Ovary (tissue), 10 donors: ENCODE measurements at regions of chr6 and their contacts with region 1.

Region 1: DNA sequence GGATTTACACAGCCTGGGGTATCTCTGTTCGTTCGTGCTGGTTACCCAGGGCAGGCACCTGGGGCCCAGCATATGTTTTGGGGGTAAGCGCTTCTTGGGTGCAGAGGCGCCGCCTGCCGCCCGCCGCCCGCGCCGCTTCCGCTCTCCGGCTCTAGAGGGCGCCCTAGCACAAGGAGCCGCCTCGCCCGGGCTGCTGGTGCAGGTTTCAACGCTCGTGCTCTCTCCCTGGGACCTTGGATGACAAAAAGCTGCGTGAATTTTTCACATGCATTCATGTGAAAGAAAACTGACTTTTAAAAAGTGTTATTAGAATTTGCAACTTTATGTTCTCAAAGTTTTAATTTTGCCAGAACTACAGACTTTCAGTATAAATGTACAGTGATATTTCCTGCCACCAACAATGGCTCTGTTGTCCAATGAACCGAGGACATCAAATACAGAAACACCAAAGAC is 32.5 kb downstream of the PRR18 start:
- DNase-seq: peak; percentile 21 to 71 (median 39)
- H3K4me3 ChIP-seq: no peak overlapping the region
- H3K27ac ChIP-seq: no peak overlapping the region
- H3K4me1 ChIP-seq: no peaks in the 10 kb centered on the region
- H3K27me3 ChIP-seq: no peaks in the 10 kb centered on the region
- CTCF ChIP-seq: peak; percentile 48 to 50 (median 50)
- EP300 ChIP-seq: no peak
- POLR2A ChIP-seq: no peak

Region 2: DNA sequence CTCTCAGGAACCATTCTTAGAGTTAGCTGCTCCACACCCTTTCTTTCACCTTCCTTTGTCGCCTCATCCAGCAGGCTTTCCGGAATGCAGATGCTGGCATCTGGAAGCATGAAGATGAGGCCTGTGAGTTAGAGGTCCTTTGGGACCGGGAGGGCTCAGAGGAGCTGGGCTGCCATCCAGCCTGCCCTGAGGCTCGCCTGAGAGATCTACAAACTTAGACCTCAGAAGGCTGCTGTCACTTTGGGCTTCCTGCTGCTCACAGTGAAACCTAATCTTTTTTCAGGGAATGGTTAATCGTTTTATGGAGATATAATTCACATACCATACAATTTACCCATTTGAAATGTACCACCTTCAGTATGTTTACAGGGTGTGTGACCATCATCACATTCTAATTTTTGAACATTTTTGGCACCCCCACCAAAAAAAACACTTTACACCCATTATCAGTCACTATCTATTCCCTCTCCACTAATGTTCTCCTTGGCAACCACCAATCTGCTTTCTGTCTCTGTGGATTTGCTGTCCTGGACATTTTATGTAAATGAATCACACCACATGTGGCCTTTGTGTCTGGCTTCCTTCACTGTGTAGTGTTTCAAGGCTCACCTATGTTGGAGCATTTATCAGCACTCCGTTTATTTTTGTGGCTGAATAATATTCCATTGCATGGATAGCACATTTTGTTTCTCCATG is 127.0 kb after region 1 on chr6:
- intact Hi-C with region 1: loop called (anchors 5 to 10 kb)
- DNase-seq: no peak
- H3K4me3 ChIP-seq: no peak overlapping the region
- H3K27ac ChIP-seq: no peak overlapping the region
- H3K4me1 ChIP-seq: no peaks in the 10 kb centered on the region
- H3K27me3 ChIP-seq: no peaks in the 10 kb centered on the region
- CTCF ChIP-seq: no peak
- EP300 ChIP-seq: no peak
- POLR2A ChIP-seq: no peak

Region 3: GRCh38 chr6:166408936-166409755 is 133.4 kb after region 1 on chr6:
- intact Hi-C with region 1: loop called (anchors 5 to 10 kb)
- DNase-seq: no peak
- H3K4me3 ChIP-seq: no peak overlapping the region
- H3K27ac ChIP-seq: no peak overlapping the region
- H3K4me1 ChIP-seq: peaks cover 1% of the 10 kb centered on the region
- H3K27me3 ChIP-seq: no peaks in the 10 kb centered on the region
- CTCF ChIP-seq: no peak
- EP300 ChIP-seq: no peak
- POLR2A ChIP-seq: no peak